ENCODE measurements at regions of chr12 and their contacts with region 1.

Region 1: GRCh38 chr12:46770501-46771183 is 55.2 kb downstream of the SLC38A4 start:
- DNase-seq: no peak
- ATAC-seq: peak; percentile 84

Region 2: GRCh38 chr12:46144433-46144832 is 626.2 kb before region 1 on chr12:
- intact Hi-C with region 1: loop called (anchors 5 kb)
- DNase-seq: no peak
- ATAC-seq: no peak

Region 3: DNA sequence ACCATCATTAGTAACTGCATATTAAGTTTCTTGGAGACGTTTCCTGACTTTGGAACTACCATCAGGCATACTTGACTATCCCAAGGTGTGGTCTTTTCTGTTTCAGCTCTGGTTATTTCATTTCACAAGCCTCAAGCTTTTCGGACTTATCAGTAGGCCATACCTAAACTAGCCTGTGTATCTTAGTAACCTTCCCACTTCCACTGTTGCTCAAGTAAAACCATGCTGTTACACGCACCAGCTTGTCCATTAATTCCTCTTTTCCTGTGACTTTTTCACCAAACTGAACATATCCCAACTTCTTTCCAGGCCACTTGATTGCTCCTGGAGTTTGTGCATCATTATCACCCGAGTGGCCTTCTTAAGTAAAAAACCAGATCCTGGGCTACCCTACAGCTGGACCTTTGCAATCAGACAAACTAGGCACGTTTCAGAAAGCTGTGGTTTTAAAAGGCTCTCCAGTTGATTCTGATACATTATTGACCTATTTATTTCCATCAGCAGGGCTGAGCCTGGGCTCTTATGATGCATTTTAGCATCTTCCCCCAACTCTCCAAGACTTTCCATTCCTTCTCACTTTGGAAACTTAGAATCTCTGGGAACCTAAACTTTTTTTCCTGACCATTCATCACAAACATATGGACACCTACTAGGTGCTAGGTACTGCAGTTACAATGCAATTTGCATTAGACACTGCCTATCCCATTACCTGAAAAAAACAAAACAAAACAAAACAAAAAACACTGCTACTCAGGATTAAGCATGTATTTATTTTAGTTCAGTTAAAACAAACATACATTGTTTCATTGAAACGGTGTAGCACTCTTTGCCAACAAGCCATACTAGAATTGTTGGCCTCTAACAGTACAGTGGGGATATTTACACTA is 413.0 kb before region 1 on chr12:
- intact Hi-C with region 1: no loop called
- DNase-seq: no peak
- ATAC-seq: peak; percentile 38

Region 4: GRCh38 chr12:46573347-46573658 is 197.3 kb before region 1 on chr12:
- intact Hi-C with region 1: no loop called
- DNase-seq: no peak
- ATAC-seq: no peak

Region 5: DNA sequence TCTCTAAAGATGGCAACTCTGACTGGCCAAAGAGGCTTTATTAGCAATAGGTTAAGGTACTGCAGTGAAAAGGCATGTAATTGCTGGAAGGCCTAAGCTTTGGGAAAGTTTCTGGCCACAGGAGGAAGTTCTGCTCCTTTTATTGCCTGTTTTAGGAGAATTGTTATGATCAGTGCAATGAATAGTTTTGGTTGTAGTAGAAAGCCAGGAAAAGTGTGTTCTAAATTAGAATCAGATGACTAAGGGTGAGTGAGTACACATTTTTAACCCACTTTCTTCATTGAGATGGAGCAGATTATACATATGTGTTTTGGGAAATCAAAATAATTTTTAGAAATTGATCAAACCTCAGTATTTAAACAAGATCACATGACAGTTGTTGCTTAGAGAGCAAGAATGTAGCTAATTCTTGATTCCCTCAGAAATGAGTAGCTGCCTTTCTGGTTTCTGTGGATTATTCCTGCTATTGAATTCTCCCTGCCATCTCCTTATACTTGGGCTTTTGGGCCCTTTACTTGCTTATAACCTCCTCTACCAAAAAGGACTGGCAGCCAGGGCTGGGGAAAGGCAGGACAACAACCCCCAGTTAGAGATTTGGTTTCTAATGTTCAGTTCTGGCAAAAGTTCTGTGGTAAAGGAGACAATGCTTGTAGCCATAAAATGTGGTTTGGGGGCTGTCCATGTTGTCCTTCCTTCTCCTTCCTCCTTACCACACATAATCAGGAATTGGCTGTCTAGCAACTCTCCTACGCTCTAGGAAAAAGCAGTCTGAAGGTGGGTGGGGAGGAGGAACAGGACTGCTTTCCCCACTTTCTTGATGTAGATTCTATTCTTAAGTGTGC is 162.0 kb before region 1 on chr12:
- intact Hi-C with region 1: no loop called
- DNase-seq: no peak
- ATAC-seq: no peak

Region 6: GRCh38 chr12:47021298-47021697 is 250.7 kb after region 1 on chr12:
- intact Hi-C with region 1: no loop called
- DNase-seq: no peak
- ATAC-seq: peak; percentile 34